Dorsolateral prefrontal cortex (tissue), 120 donors: ENCODE measurements at regions of chrX and their contacts with region 1.

Region 1: DNA sequence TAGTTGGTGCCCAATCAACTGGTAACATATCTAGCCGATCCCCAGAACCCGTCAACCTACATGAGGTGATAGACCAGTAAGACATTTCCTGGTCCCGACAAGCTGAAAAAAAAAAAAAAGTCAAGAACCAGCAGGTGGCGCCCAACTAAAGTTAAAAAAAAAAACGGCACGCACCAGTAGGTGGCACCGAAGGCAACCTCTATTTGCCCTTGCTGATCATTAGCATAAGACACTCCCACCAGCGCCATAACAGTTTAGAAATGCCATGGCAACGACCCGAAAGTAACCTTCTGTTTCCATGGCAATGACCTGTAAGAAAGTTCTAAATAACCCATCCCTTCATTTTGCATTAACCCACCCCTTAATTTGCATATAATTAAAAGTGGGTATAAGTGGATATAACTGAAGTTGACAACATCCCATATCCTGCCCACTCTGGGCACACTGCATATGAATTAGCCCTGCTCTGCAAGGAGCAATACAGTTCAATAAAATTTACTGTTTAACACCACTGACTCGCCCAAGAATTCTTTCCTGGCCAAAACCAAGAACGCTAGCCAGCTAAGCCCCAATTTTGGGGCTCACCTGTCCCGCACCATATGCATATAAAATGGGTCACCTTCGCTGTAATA is 83.9 kb upstream of the SPANXB1 start:
- DNase-seq: peak in 2 of 10 donors; percentile 16 to 26
- H3K4me3 ChIP-seq: no peak overlapping the region
- H3K27ac ChIP-seq: no peak overlapping the region
- H3K27me3 ChIP-seq: peaks cover 0 to 47% (median 7%) of the 10 kb centered on the region in 45 donors
- CTCF ChIP-seq: peak in 55 of 56 donors; percentile 7 to 79 (median 66)

Region 2: GRCh38 chrX:140799216-140799615 is 119.3 kb before region 1 on chrX:
- intact Hi-C with region 1: no loop called
- DNase-seq: no peak
- H3K4me3 ChIP-seq: no peak overlapping the region
- H3K27ac ChIP-seq: no peak overlapping the region
- H3K27me3 ChIP-seq: peaks cover 0 to 51% (median 5%) of the 10 kb centered on the region in 45 donors
- CTCF ChIP-seq: no peak

Region 3: DNA sequence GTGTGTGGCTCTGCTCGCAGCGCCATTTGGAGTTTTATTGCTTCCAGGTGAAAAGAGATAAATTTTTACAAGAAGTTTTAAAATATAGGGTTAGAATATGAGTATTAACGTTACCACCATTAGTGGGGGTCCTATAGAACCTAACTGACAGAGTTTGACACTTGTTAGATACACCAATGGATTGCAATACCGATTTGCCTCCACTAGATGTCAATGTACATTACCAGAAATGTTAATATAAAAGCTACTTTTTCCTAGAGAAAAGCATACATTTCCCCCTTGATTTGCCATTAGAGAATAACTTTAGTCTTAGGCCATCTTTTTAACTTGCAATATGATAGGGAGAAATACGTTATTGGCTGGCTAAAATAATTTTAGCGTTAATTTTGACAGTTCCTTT is 100.6 kb before region 1 on chrX:
- intact Hi-C with region 1: no loop called
- DNase-seq: no peak
- H3K4me3 ChIP-seq: no peak overlapping the region
- H3K27ac ChIP-seq: no peak overlapping the region
- H3K27me3 ChIP-seq: peaks cover 0 to 63% (median 17%) of the 10 kb centered on the region in 45 donors
- CTCF ChIP-seq: peak in 53 of 56 donors; percentile 17 to 68 (median 51)

Region 4: GRCh38 chrX:141278302-141278701 is 359.8 kb after region 1 on chrX:
- intact Hi-C with region 1: loop called in 1 of 2 experiments (anchors 5 kb)
- DNase-seq: peak in 1 of 10 donors; percentile 34
- H3K4me3 ChIP-seq: no peak overlapping the region
- H3K27ac ChIP-seq: no peak overlapping the region
- H3K27me3 ChIP-seq: peaks cover 0 to 52% (median 6%) of the 10 kb centered on the region in 45 donors
- CTCF ChIP-seq: peak; percentile 8 to 74 (median 58)